ENCODE measurements at regions of chr2 and their contacts with region 1.

Region 1: DNA sequence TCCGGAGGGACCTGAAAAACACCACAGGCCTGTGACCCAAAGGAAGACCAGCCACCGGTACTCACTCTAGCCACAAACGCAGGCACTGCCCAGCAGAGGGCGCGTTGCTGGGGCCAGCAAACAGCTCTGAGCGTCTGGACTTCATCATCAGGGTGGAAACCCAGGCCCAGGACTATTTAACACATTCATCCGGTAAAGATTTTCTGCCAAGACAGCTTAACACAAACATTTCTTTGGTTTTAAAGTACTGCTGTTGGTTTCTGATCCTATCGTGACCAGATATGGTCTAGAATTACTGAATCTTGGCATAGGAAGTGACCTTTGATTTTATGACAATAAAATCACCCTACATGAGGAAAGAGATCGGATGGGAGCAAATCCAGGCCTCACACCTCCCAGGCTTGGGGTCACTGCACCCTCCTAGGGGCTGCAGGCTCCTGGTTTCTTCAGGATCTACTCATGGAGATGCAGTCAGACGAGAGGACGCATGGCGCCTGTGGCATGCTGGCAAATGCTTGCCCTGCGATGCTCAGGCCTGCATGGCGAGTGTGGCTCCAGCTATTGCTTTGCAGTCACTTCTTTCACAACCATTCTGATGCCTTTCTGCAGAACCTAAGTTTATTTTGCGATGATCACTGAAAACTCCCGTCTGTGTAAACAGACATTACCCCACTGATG is 130.4 kb downstream of the COL4A4 start:
- DNase-seq: no peak
- H3K4me3 ChIP-seq: no peak overlapping the region
- CTCF ChIP-seq: peak; percentile 75

Region 2: GRCh38 chr2:227022608-227023007 is 11.0 kb before region 1 on chr2:
- CTCF ChIA-PET with region 1: interaction called, 23 read pairs
- POLR2A ChIA-PET with region 1: no interaction called
- DNase-seq: no peak
- H3K4me3 ChIP-seq: no peak overlapping the region
- CTCF ChIP-seq: no peak